Colonic mucosa (tissue), 4 donors: ENCODE measurements at regions of chr4 and their contacts with region 1.

Region 1: GRCh38 chr4:20251796-20252655 is at the start of gene SLIT2:
- DNase-seq: peak; percentile 80
- H3K4me3 ChIP-seq: peak within 1 kb of the TSS; percentile 51
- H3K27ac ChIP-seq: no peak within 1 kb of the TSS
- H3K4me1 ChIP-seq: peaks cover 7% of the 10 kb centered on the region
- H3K27me3 ChIP-seq: peaks cover 35% of the 10 kb centered on the region
- CTCF ChIP-seq: no peak
- total RNA-seq, gene SLIT2: 2.0 to 4.4 TPM

Region 2: DNA sequence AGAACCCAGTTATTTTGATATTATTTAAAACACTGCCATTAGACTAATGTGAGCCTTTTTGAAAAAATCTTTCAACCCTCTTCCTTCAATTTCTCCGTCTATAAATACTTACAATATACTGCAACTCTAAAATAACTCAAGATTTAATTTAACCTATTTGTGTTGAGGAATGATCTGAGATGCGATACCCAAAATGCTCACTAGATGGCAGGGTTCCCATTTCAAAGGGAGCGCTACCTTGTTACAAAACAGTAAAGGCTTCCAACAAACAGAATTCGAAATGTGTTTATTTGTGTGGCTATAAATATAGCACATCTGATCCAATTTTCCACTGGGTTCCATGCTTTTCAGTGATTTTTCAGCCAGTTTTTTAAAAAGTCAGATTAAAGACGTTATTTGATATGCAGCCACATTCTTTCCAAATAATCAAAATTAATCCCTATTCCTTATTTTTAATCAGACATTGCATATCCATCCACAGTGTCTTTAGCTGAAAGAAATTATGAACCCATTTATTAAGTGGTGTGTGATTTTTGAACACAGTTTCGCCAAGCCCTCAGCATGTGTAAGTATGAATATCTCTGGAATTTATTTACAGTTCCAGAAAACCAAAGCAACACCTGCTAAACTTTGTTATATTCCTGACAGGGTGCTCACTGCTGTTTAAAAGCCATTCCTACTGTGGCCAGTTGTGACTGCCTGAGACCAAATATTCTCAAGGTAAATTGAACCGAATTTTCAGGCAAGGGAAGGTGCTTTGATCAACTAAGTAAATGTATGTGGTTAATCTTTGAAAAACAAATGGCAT is 1562.5 kb before region 1 on chr4:
- intact Hi-C with region 1: loop called (anchors 10 kb)
- DNase-seq: peak; percentile 72
- H3K4me3 ChIP-seq: no peak overlapping the region
- H3K27ac ChIP-seq: no peak overlapping the region
- H3K4me1 ChIP-seq: no peaks in the 10 kb centered on the region
- H3K27me3 ChIP-seq: no peaks in the 10 kb centered on the region
- CTCF ChIP-seq: peak; percentile 80

Region 3: DNA sequence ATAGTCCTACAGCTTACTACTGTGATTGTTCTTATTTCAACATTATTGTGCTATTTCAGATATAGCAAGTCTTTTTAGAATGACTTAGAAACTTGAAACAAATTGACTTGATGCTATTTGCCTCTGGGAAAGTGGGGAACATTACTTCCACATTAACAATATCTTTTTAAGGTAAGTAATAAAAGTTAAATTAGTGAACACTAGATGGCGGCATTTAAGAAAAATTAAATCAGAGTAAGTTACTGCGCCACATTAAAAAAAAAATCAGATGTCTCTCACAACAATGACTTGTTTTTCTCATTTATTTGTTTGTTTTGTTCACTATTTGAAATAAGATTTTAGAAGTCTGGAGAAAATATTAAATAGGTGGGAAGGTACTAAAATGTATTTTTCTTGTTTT is 1027.2 kb before region 1 on chr4:
- intact Hi-C with region 1: loop called (anchors 10 kb)
- DNase-seq: no peak
- H3K4me3 ChIP-seq: no peak overlapping the region
- H3K27ac ChIP-seq: no peak overlapping the region
- H3K4me1 ChIP-seq: no peaks in the 10 kb centered on the region
- H3K27me3 ChIP-seq: no peaks in the 10 kb centered on the region
- CTCF ChIP-seq: no peak